Activated naive CD4-positive, alpha-beta T cell treated with anti-CD3 and anti-CD28 coated beads for 36 hours (primary cell): ENCODE measurements at regions of chr11 and their contacts with region 1.

Region 1: DNA sequence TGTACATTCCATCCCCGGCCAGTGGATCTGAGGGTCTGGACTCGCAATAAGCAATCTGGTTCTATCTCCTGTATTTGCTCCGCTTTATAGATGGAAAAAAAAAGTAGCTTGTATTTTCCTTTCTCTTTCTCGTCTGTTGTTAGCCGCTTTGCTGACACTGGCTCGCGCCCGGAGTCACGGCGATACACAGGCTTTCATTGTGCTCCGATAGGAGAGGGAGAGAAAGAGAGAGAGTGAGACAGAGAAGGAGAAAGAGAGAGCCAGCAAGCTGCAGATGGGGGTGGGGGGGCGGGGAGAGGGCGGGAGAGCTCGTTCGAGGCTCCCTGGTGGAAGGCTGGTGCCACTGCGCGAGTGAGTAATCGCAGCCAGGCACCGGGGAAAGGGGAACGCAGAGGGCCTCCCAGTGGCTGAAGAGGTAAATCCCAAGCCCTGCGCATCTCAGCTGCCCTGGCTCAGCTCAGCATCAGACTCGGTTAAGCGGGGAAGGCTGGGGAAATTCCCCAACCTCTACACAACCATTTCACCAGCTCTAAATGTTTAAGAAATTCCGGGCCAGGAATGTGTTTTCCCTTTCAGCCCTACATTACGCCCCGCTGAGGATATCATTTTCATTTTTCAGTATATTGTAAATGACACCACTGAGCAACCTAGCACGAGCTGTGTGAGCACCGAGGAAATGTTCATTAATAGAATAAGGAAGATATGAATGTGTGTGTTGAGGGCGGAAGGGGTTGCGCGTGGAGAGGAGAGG is at the start of gene MAML2:
- DNase-seq: peak; percentile 97
- H3K4me3 Mint-ChIP-seq: peak within 1 kb of the TSS; percentile 98
- H3K27ac Mint-ChIP-seq: peak within 1 kb of the TSS; percentile 94
- H3K4me1 Mint-ChIP-seq: peaks cover 22% of the 10 kb centered on the region
- H3K27me3 Mint-ChIP-seq: no peaks in the 10 kb centered on the region
- total RNA-seq, gene MAML2: 26.6 to 28.1 TPM

Region 2: GRCh38 chr11:94543695-94544645 is 1799.2 kb before region 1 on chr11 and contains the start of gene FUT4:
- CTCF ChIA-PET with region 1: no interaction called
- intact Hi-C with region 1: loop called (anchors 5 kb)
- DNase-seq: peak; percentile 80
- H3K4me3 Mint-ChIP-seq: peak within 1 kb of the TSS; percentile 100
- H3K27ac Mint-ChIP-seq: peak within 1 kb of the TSS; percentile 98
- H3K4me1 Mint-ChIP-seq: peaks cover 32% of the 10 kb centered on the region
- H3K27me3 Mint-ChIP-seq: no peaks in the 10 kb centered on the region
- total RNA-seq, gene FUT4: 2.8 to 2.9 TPM

Region 3: DNA sequence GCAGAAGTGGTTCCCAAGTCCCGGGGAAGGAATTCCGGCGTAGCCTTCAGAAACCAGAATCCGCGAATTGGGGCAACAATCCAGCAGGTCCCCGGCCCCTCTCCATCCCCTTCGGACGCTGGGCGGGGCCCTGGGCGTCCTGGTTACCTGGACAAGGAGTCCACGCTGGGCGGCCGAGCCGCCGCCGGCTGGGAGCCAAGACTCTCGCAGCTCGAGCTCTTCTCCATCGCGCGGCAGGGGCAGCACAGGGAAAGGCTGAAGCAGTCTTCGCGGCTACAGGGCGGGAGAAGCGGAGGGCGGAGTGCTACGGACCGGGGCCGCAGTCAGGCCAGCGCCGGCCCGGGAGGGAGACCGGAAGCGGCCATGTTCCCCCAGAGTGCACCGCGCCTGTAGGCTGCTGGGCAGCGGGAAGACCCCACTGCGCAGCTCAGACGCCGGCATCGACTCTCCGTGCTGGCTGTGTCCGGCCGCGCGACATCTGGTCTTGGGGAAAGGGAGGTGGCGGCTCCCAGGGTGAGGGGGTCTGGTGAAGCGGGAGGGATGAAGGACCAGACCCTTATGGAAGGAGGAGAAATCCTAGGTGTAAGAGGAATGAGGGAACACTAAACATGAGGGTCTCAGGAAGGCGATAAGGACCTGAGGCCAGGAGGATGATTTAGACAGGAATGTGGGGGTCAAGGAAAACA is 419.3 kb before region 1 on chr11 and contains the start of gene MTMR2:
- CTCF ChIA-PET with region 1: no interaction called
- intact Hi-C with region 1: loop called (anchors 2 kb)
- DNase-seq: peak; percentile 62
- H3K4me3 Mint-ChIP-seq: peak within 1 kb of the TSS; percentile 94
- H3K27ac Mint-ChIP-seq: peak within 1 kb of the TSS; percentile 95
- H3K4me1 Mint-ChIP-seq: peaks cover 28% of the 10 kb centered on the region
- H3K27me3 Mint-ChIP-seq: no peaks in the 10 kb centered on the region
- total RNA-seq, gene MTMR2: 32.5 to 34.6 TPM

Region 4: DNA sequence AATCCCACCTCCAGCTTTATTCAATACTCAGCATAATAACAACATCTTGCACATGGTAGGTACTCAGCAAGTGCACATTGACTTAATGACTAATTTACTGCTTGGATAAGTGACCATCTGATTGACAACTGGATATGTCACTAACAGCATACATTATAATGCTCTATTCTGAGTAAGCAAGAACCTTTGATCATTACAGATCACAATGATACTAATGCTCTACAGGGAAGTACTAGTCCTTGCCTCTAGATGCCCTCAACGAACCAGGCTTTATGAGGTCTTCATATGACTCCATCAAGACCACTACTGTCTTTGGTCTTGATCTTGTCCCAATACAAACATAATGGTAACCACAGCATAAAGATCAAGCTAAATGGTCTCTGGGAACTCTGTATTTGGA is 251.7 kb before region 1 on chr11:
- CTCF ChIA-PET with region 1: interaction called, 4 read pairs
- intact Hi-C with region 1: loop called (anchors 1 kb)
- DNase-seq: peak; percentile 26
- H3K4me3 Mint-ChIP-seq: no peak overlapping the region
- H3K27ac Mint-ChIP-seq: no peak overlapping the region
- H3K4me1 Mint-ChIP-seq: peaks cover 56% of the 10 kb centered on the region
- H3K27me3 Mint-ChIP-seq: no peaks in the 10 kb centered on the region

Region 5: GRCh38 chr11:96215110-96215782 is 127.9 kb before region 1 on chr11:
- CTCF ChIA-PET with region 1: interaction called, 12 read pairs
- intact Hi-C with region 1: no loop called
- DNase-seq: peak; percentile 51
- H3K4me3 Mint-ChIP-seq: peak overlapping the region; percentile 49
- H3K27ac Mint-ChIP-seq: peak overlapping the region; percentile 94
- H3K4me1 Mint-ChIP-seq: peaks cover 79% of the 10 kb centered on the region
- H3K27me3 Mint-ChIP-seq: no peaks in the 10 kb centered on the region

Region 6: GRCh38 chr11:96254087-96254486 is 89.0 kb before region 1 on chr11:
- CTCF ChIA-PET with region 1: interaction called, 13 read pairs
- intact Hi-C with region 1: loop called (anchors 1 kb)
- DNase-seq: peak; percentile 49
- H3K4me3 Mint-ChIP-seq: peak overlapping the region; percentile 58
- H3K27ac Mint-ChIP-seq: peak overlapping the region; percentile 77
- H3K4me1 Mint-ChIP-seq: peaks cover 89% of the 10 kb centered on the region
- H3K27me3 Mint-ChIP-seq: no peaks in the 10 kb centered on the region

Region 7: GRCh38 chr11:96306933-96307775 is 36.0 kb before region 1 on chr11:
- CTCF ChIA-PET with region 1: interaction called, 14 read pairs
- intact Hi-C with region 1: loop called (anchors 1 kb)
- DNase-seq: peak; percentile 64
- H3K4me3 Mint-ChIP-seq: peak overlapping the region; percentile 47
- H3K27ac Mint-ChIP-seq: peak overlapping the region; percentile 25
- H3K4me1 Mint-ChIP-seq: peaks cover 77% of the 10 kb centered on the region
- H3K27me3 Mint-ChIP-seq: no peaks in the 10 kb centered on the region